Endothelial cell of umbilical vein (primary cell): ENCODE measurements at regions of chr22 and their contacts with region 1.

Region 1: DNA sequence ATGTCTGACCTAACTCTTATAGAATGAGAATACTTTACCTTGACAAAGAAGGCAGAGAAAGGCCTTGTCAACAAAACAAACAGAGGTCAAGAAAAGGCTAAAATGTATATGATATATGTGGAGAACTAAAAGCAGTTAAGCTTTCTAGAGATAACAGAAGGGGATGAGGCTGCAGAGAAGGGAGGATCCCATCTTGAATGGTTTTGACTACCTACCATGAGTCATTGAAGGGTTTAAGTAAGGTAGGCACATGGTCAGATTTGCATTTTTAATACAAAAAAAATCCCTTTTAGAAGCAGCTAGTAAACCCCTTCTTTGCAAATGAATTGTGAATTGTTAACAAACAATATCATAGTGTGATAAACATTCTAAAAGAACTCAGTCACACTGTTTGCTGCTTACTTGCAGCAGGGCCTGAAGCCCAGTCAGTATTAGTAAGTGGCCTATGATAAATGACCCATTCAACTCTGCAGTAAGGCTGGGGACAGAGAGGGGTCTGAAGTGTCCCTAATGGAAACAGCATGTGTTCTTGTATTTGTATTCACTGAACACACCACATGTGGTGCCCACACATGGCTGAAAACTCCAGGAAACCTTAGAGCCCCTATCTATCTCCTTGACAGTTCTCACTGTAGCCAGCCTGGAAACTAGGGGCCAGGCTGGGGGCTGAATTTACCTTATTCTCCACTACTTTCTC is 328.8 kb upstream of the PITPNB start:
- DNase-seq: no peak
- H3K4me3 ChIP-seq: no peak overlapping the region
- H3K27ac ChIP-seq: no peak overlapping the region
- H3K4me1 ChIP-seq: no peaks in the 10 kb centered on the region
- H3K27me3 ChIP-seq: no peaks in the 10 kb centered on the region
- CTCF ChIP-seq: no peak
- POLR2A ChIP-seq: no peak

Region 2: DNA sequence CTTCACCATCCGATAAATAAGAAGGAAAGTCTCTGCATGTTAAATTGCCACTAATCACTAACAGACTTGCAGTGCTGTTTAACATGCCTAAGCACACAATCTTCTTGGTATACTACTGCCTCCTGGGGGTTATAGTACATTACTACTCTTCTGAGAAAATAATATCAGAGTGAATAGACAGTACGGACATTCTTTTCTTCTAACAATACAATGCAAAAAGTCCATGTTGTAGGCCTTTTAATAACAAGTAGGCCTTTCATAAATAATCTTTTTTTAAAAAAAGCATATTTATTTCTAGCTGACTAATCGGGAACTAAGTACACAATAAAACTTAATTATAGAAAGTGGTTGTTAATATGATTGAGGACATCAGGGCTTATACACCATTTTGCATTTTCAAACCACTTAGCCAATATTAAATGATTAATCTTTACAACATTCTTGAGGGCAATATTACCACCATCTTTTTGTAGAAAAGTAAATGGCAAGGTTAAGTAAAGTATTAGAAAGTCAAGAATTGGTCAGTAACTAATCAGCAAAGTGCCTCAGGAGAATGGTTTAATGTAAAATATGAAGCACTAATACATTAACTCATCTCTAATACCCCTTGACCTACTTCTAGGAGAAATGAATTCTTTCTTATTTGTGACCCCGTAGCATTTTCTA is 347.1 kb after region 1 on chr22:
- CTCF ChIA-PET with region 1: interaction called, 12 read pairs
- POLR2A ChIA-PET with region 1: no interaction called
- dilution Hi-C with region 1: no loop called
- intact Hi-C with region 1: loop called (anchors 1 kb)
- DNase-seq: peak; percentile 69
- H3K4me3 ChIP-seq: no peak overlapping the region
- H3K27ac ChIP-seq: no peak overlapping the region
- H3K4me1 ChIP-seq: peaks cover 4% of the 10 kb centered on the region
- H3K27me3 ChIP-seq: no peaks in the 10 kb centered on the region
- CTCF ChIP-seq: peak; percentile 46 to 53
- POLR2A ChIP-seq: no peak